GM12878 (cell line): ENCODE measurements at regions of chr19 and their contacts with region 1.

Region 1: DNA sequence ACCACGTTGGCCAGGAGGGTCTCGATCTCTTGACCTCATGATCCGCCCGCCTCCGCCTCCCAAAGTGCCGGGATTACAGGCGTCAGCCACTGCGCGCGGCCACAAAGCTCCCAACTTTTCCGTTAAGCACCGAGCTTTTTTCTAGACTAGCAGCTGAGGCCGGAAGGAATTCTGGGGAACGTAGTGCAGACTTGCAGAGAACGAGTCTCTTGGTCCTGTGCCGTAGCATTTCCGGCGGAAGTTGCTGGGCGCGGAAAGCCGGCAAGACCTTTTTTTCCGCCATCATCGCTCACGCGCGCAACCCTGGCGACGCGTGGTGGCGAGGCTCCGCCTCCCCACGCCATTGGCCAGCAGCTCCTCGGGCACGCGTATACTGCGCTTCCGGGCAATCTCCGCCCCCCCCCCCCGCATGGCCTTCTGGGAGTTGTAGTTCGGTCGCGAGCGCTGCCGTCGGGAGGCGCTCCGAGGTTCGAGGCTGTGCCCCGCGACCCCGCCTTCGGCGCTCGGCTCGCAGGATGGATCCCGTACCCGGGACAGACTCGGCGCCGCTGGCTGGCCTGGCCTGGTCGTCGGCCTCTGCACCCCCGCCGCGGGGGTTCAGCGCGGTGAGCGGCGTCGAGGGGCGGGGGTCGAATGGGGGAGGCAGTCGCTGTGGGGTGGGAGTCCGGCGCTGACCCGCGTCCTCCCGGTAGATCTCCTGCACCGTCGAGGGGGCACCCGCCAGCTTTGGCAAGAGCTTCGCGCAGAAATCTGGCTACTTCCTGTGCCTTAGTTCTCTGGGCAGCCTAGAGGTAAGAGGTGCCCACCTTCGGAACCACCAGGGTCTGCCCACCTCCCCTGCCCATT is at the start of gene MVB12A:
- DNase-seq: peak; percentile 97
- ATAC-seq: peak; percentile 98
- H3K4me3 ChIP-seq: peak within 1 kb of the TSS; percentile 99
- H3K27ac ChIP-seq: peak within 1 kb of the TSS; percentile 59
- H3K4me1 ChIP-seq: peaks cover 3% of the 10 kb centered on the region; the same call in 1 of the 2 replicates
- H3K27me3 ChIP-seq: no peaks in the 10 kb centered on the region
- CTCF ChIP-seq: no peak
- EP300 ChIP-seq: no peak
- POLR2A ChIP-seq: peak; percentile 67
- RAD21 ChIP-seq: no peak
- polyA plus RNA-seq, gene MVB12A: 1.2 to 2.6 TPM

Region 2: DNA sequence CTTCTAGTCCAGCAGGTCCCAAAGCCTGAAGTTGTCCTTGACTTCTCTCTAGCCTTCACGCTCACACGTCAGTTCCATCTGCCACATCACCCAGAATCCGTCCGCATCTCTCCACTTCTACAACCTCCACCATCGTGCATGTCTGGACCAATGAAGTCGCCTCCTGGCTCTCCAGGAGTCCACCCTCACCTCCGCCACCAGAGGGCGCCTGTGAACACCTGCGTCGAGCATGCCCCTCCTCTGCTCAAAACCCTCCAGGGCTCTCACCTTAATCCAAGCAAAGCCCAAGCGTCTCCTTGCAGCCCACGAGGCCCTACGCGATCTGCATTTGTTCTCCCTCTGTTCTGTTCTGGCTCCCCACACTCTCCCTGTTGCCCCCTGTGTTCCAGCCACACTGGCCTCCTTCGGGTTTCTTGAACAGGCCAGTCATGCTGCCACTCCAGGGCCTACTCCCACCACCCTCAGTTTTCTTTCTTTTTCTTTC is 159.0 kb before region 1 on chr19:
- CTCF ChIA-PET with region 1: no interaction called
- POLR2A ChIA-PET with region 1: no interaction called
- RAD21 ChIA-PET with region 1: no interaction called
- SMC1A ChIA-PET with region 1: no interaction called
- in situ Hi-C with region 1: no loop called
- intact Hi-C with region 1: no loop called
- DNase-seq: no peak
- ATAC-seq: peak; percentile 100
- H3K4me3 ChIP-seq: no peak overlapping the region
- H3K27ac ChIP-seq: no peak overlapping the region
- H3K4me1 ChIP-seq: peaks cover 7% of the 10 kb centered on the region
- H3K27me3 ChIP-seq: no peaks in the 10 kb centered on the region
- CTCF ChIP-seq: peak; percentile 90 to 99 (median 97)
- EP300 ChIP-seq: no peak
- POLR2A ChIP-seq: no peak
- RAD21 ChIP-seq: peak; percentile 67

Region 3: DNA sequence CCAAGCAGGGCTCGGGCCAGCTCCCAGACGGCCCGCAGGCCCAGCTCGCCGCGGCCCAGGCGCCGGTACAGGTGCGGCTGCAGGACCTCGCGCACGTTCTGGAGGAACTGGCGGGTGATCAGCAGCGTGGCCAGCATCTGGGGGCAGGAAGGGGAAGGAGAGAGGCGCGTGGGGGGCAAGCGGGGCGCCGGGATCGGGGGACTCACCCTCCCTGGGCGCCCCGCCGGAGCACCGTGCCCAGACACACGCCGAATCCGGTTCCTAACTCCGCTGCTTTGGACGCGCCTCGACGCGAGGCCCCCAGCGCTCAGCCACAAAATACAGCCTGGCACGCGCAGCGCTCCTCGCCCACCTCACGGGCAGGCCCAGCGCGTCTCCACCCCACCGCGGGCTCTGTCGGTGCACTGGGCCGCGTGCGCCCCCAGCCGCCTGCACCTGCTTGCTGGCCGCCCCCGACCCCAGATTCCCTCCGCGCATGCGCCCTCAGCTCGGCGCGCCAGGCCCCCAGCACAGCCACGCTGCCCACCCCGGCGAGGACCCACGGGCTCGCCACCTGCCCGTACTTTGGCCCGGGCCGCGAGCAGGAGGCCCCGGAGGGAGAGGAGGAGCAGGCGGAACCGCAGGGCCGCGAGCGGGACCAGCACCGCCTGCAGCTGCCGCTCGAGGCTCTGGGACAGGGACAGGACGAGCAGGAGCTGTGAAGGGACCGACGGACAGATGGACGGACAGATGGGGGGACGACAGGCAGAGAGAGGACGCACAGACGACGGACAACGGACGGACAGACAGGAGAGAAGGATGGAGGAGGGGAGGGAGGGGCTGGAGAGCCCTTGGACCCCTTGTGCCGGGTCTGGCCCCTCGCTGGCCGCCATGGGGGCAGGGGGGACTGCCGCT is 90.8 kb before region 1 on chr19:
- CTCF ChIA-PET with region 1: no interaction called
- POLR2A ChIA-PET with region 1: no interaction called
- RAD21 ChIA-PET with region 1: no interaction called
- SMC1A ChIA-PET with region 1: no interaction called
- in situ Hi-C with region 1: no loop called
- intact Hi-C with region 1: no loop called
- DNase-seq: no peak
- ATAC-seq: no peak
- H3K4me3 ChIP-seq: no peak overlapping the region
- H3K27ac ChIP-seq: no peak overlapping the region
- H3K4me1 ChIP-seq: peaks cover 5% of the 10 kb centered on the region; the same call in 1 of the 2 replicates
- H3K27me3 ChIP-seq: no peaks in the 10 kb centered on the region; a peak in 2 of 4 replicates
- CTCF ChIP-seq: no peak
- EP300 ChIP-seq: no peak
- POLR2A ChIP-seq: no peak
- RAD21 ChIP-seq: no peak

Region 4: DNA sequence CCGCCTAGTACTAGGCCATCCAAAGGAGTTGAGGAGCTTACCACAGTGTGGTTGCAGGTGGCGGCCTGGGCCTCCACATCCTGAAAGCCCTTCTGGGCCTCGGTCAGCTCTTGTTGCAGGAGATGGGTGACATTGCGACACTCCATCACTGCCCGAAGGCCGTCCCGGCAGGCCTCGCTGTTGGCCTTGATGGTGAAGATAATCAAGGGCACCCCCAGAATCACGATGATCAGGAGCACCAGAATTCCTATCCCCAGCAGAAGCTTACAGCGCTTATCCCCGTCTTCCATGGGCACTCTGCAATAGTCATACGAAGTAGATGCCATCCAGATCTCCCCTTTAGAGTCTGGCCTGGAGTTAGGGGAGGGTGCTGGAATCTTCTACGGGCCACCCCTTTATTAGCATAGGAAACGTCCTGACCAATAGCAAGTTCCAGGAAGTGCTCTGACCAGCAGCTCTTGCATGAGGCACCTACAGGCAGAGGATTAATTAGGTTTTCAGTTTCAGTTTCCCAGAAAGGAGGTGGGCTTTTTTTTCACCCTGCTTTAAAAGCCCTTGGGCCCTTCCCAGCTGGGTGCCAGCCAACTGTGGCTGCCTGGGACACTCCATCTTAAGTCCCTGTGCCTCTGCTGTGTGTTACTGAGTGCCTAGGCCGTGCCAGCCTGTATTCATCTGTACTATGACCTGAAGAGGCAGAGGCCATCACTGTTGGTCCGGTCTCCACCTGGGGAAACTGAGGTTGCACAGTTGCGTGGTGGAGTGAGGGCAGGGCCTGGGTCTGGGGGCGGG is 14.4 kb before region 1 on chr19 and contains the start of gene BST2:
- CTCF ChIA-PET with region 1: interaction called, 12 read pairs
- POLR2A ChIA-PET with region 1: interaction called, 46 read pairs
- RAD21 ChIA-PET with region 1: interaction called, 21 read pairs
- SMC1A ChIA-PET with region 1: interaction called, 26 read pairs
- in situ Hi-C with region 1: no loop called
- intact Hi-C with region 1: no loop called
- DNase-seq: peak; percentile 87
- ATAC-seq: peak; percentile 92
- H3K4me3 ChIP-seq: peak within 1 kb of the TSS; percentile 83
- H3K27ac ChIP-seq: peak within 1 kb of the TSS; percentile 99
- H3K4me1 ChIP-seq: peaks cover 6% of the 10 kb centered on the region
- H3K27me3 ChIP-seq: no peaks in the 10 kb centered on the region
- CTCF ChIP-seq: no peak
- EP300 ChIP-seq: no peak
- POLR2A ChIP-seq: peak; percentile 82
- RAD21 ChIP-seq: no peak
- polyA plus RNA-seq, gene BST2: 16.6 to 111 TPM

Region 5: GRCh38 chr19:17847538-17848366 is 427.9 kb after region 1 on chr19 and contains the start of gene JAK3:
- CTCF ChIA-PET with region 1: no interaction called
- POLR2A ChIA-PET with region 1: interaction called, 10 read pairs
- RAD21 ChIA-PET with region 1: no interaction called
- SMC1A ChIA-PET with region 1: no interaction called
- in situ Hi-C with region 1: no loop called
- intact Hi-C with region 1: no loop called
- DNase-seq: peak; percentile 77
- ATAC-seq: peak; percentile 93
- H3K4me3 ChIP-seq: peak within 1 kb of the TSS; percentile 72
- H3K27ac ChIP-seq: peak within 1 kb of the TSS; percentile 71
- H3K4me1 ChIP-seq: peaks cover 36% of the 10 kb centered on the region
- H3K27me3 ChIP-seq: no peaks in the 10 kb centered on the region
- CTCF ChIP-seq: no peak
- EP300 ChIP-seq: peak; percentile 14 to 77; a peak in 2 of 4 replicates
- POLR2A ChIP-seq: peak; percentile 93
- RAD21 ChIP-seq: no peak
- polyA plus RNA-seq, gene JAK3: 7.8 to 37.2 TPM